ENCODE measurements at regions of chr12 and their contacts with region 1.

Region 1: DNA sequence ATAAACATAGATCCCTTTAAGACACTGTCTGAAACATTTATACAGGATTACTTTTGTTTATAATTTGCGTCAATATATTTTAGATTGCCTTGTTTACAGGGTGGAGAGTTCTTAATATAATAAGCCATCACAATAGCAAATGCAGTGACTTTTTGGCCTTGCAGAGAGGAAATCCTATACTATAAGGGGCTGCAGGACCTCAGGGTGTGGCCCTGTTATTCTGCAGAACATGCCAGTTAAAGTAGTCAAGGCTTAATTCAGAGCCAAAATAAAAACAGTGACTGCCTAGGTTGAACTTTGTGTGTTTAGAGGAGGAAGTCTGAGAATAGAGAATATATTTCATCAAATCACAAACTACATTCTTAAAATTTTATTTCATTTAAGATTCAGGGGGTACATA is 381.6 kb downstream of the DUSP6 start:
- DNase-seq: no peak
- ATAC-seq: no peak
- H3K4me3 ChIP-seq: peak overlapping the region; percentile 41 to 45
- H3K27ac ChIP-seq: peak overlapping the region; percentile 75
- H3K4me1 ChIP-seq: peaks cover 24 to 75% of the 10 kb centered on the region in 2 experiments
- H3K27me3 ChIP-seq: no peaks in the 10 kb centered on the region
- CTCF ChIP-seq: no peak
- POLR2A ChIP-seq: no peak
- RAD21 ChIP-seq: no peak

Region 2: GRCh38 chr12:88946372-88946997 is 24.3 kb before region 1 on chr12:
- CTCF ChIA-PET with region 1: no interaction called
- POLR2A ChIA-PET with region 1: interaction called, 12 read pairs
- RAD21 ChIA-PET with region 1: no interaction called
- intact Hi-C with region 1: no loop called
- DNase-seq: peak; percentile 64
- ATAC-seq: peak; percentile 73
- H3K4me3 ChIP-seq: no peak overlapping the region
- H3K27ac ChIP-seq: peak overlapping the region; percentile 87
- H3K4me1 ChIP-seq: peaks cover 84 to 88% of the 10 kb centered on the region in 2 experiments
- H3K27me3 ChIP-seq: no peaks in the 10 kb centered on the region
- CTCF ChIP-seq: peak in 2 of 3 experiments; percentile 42 to 50; a peak in 4 of 6 replicates
- POLR2A ChIP-seq: no peak
- RAD21 ChIP-seq: no peak

Region 3: GRCh38 chr12:88952562-88952942 is 18.2 kb before region 1 on chr12:
- CTCF ChIA-PET with region 1: no interaction called
- POLR2A ChIA-PET with region 1: interaction called, 12 read pairs
- RAD21 ChIA-PET with region 1: no interaction called
- intact Hi-C with region 1: no loop called
- DNase-seq: peak; percentile 65
- ATAC-seq: peak; percentile 60
- H3K4me3 ChIP-seq: peak overlapping the region in 1 of 2 experiments; percentile 31; a peak in 2 of 4 replicates
- H3K27ac ChIP-seq: peak overlapping the region; percentile 97
- H3K4me1 ChIP-seq: peaks cover 80 to 88% of the 10 kb centered on the region in 2 experiments
- H3K27me3 ChIP-seq: no peaks in the 10 kb centered on the region
- CTCF ChIP-seq: no peak
- POLR2A ChIP-seq: no peak
- RAD21 ChIP-seq: peak; percentile 8; the same call in 1 of the 2 replicates

Region 4: DNA sequence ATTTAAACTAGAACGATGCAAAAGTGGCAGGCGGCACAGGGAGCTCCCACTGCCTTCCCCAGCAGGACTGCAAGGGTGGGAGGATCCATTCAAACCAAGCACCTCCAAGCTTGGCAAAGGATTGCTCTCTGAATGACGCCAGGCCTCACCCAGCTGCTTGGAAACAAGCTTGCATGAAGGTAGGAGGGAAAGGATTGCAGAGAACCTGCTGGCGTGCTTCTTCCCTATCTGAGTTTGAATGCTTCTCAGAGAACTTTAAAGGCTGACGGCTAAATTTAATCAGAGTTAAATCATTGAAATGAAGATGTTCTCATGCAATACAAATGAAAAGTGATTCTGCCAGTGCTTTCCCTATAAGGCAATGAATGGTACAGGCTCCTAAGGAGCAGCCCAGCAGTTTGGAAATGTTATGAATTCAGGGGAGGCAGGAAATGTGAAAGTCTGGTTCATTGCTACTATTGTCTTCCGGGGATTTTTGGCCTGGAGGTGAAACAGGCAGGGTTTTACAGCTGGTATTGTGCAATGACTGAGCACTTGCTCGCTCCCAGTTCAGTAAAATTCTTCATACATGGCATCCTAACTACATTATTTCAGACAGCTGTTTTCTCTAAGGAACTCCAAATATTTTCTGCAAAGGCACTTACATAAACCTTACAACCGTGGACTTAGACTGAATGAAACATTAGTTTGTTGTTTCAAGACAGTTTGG is 413.5 kb after region 1 on chr12:
- CTCF ChIA-PET with region 1: no interaction called
- POLR2A ChIA-PET with region 1: no interaction called
- RAD21 ChIA-PET with region 1: no interaction called
- intact Hi-C with region 1: no loop called
- DNase-seq: no peak
- ATAC-seq: no peak
- H3K4me3 ChIP-seq: no peak overlapping the region
- H3K27ac ChIP-seq: no peak overlapping the region
- H3K4me1 ChIP-seq: peaks cover 0 to 4% of the 10 kb centered on the region in 2 experiments; a peak in 1 of 4 replicates
- H3K27me3 ChIP-seq: no peaks in the 10 kb centered on the region
- CTCF ChIP-seq: no peak
- POLR2A ChIP-seq: no peak
- RAD21 ChIP-seq: no peak